ENCODE measurements at regions of chr10 and their contacts with region 1.

Region 1: GRCh38 chr10:128268015-128268722 is 141.9 kb upstream of the MKI67 start:
- DNase-seq: no peak

Region 2: GRCh38 chr10:128287921-128288320 is 19.8 kb after region 1 on chr10:
- intact Hi-C with region 1: loop called in 1 of 2 experiments (anchors 2 kb)
- DNase-seq: no peak

Measured in posterior vena cava (tissue), 2 donors.